ENCODE measurements at regions of chr5 and their contacts with region 1.

Region 1: DNA sequence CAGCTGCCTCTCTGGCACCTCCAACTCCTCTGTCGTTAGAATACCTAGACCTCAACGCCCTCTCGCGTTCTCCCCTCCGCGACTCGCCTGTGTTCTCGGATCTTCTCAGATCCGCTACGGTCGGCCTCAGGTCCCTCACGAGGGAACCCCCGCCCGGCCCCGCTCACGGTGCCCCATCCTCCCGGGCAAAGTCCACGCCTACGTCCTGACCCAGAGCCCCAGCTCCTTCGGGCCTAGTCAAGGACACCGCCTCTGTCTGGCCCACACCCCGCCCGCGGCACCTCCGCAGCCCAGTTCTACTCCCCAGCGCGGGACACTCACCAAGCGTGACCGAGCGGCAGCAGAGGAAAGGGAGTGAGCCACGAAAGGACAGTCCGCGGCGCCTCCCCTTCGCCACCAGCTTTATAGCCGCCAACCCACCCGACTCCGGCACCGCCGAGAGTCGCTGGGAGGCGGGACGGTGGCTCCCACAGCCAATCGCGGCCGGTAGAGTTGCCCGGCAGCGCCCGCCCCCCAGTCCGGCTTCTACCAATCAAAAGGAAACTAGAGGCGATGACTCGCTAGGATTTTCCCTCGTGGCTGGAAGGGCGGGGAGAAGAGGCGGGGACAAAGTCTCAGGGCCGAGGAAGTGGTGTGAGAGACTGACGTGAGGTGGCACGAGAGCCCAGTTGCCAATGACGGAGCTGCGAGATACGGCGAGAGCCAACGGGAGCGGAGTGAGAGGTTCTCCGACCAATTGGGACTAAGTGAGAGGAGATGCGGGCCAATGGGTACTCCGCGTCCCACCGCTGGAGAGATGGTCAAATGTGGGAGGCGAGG is at the start of gene HMGCS1:
- DNase-seq: peak; percentile 100
- ATAC-seq: peak; percentile 92
- H3K4me3 ChIP-seq: peak within 1 kb of the TSS; percentile 79
- H3K27ac ChIP-seq: peak within 1 kb of the TSS; percentile 84
- H3K4me1 ChIP-seq: peaks cover 6% of the 10 kb centered on the region
- H3K27me3 ChIP-seq: no peaks in the 10 kb centered on the region
- CTCF ChIP-seq: peak in 2 of 3 experiments; percentile 6 to 16; a peak in 1 of 6 replicates
- EP300 ChIP-seq: peak in 1 of 2 experiments; percentile 60; a peak in 1 of 4 replicates
- POLR2A ChIP-seq: peak; percentile 99
- RAD21 ChIP-seq: peak; percentile 23; the same call in 1 of the 2 replicates
- polyA plus RNA-seq, gene HMGCS1: 74.9 to 94.1 TPM

Region 2: GRCh38 chr5:43034591-43034968 is 278.7 kb before region 1 on chr5:
- CTCF ChIA-PET with region 1: no interaction called
- POLR2A ChIA-PET with region 1: no interaction called
- RAD21 ChIA-PET with region 1: no interaction called
- SMC1A ChIA-PET with region 1: no interaction called
- in situ Hi-C with region 1: no loop called
- intact Hi-C with region 1: no loop called
- DNase-seq: no peak
- ATAC-seq: no peak
- H3K4me3 ChIP-seq: no peak overlapping the region
- H3K27ac ChIP-seq: no peak overlapping the region
- H3K4me1 ChIP-seq: peaks cover 16% of the 10 kb centered on the region
- H3K27me3 ChIP-seq: no peaks in the 10 kb centered on the region
- CTCF ChIP-seq: no peak
- EP300 ChIP-seq: no peak
- POLR2A ChIP-seq: no peak
- RAD21 ChIP-seq: no peak

Region 3: GRCh38 chr5:43073597-43074546 is 239.4 kb before region 1 on chr5:
- CTCF ChIA-PET with region 1: no interaction called
- POLR2A ChIA-PET with region 1: no interaction called
- RAD21 ChIA-PET with region 1: no interaction called
- SMC1A ChIA-PET with region 1: no interaction called
- in situ Hi-C with region 1: no loop called
- intact Hi-C with region 1: loop called (anchors 2 kb)
- DNase-seq: no peak
- ATAC-seq: peak; percentile 66
- H3K4me3 ChIP-seq: no peak overlapping the region
- H3K27ac ChIP-seq: no peak overlapping the region
- H3K4me1 ChIP-seq: 0 out of 2 replicates have a peak, but pooled peaks cover 4% of the 10 kb centered on the region
- H3K27me3 ChIP-seq: no peaks in the 10 kb centered on the region
- CTCF ChIP-seq: peak; percentile 50 to 71 (median 71); a peak in 5 of 6 replicates
- EP300 ChIP-seq: no peak
- POLR2A ChIP-seq: no peak
- RAD21 ChIP-seq: peak; percentile 81

Measured in GM12878 (cell line).